CD8-positive, alpha-beta T cell (primary cell): ENCODE measurements at regions of chr2 and their contacts with region 1.

Region 1: DNA sequence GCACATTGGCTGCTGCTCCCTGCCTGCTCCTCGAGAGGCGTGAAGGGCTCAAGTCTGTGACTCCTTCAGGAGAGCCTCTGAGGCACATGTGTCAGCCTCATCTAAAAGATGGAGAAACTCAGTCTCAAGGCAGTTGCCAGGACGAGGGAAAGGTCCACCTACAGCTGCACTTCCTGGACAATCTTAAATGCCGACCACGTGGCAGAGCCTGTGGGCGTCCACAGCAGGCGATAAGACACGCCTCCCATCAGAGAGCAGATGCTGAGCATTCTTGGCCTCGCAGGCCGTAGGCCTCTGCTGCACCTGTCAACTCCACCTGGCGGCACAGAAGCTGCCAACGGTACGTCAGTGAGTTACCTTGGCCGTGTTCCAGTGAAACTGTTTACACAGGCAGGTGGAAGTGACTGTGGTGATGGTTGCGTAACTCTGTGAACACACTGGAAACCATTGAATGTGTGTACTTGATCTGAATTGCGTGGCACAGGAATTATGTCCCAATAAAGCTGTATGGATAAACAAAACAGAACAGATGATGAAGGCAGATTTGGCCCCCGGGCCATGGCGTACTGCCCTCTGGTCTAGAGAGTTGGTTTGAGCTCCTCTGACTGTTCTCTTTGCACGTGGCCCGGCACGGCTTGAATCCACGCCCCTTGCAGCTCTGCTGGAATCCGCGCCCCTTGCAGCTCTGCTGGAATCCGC is 114.5 kb downstream of the RNF144A start:
- DNase-seq: peak; percentile 13 to 77 (median 51)
- ATAC-seq: peak; percentile 91
- H3K4me3 ChIP-seq: no peak overlapping the region
- H3K4me3 Mint-ChIP-seq: no peak overlapping the region
- H3K27ac ChIP-seq: peak overlapping the region in 1 of 2 experiments; percentile 24
- H3K27ac Mint-ChIP-seq: peak overlapping the region; percentile 69
- H3K4me1 ChIP-seq: peaks cover 6% of the 10 kb centered on the region
- H3K4me1 Mint-ChIP-seq: peaks cover 11% of the 10 kb centered on the region
- H3K27me3 ChIP-seq: no peaks in the 10 kb centered on the region
- H3K27me3 Mint-ChIP-seq: no peaks in the 10 kb centered on the region
- CTCF ChIP-seq: no peak

Region 2: DNA sequence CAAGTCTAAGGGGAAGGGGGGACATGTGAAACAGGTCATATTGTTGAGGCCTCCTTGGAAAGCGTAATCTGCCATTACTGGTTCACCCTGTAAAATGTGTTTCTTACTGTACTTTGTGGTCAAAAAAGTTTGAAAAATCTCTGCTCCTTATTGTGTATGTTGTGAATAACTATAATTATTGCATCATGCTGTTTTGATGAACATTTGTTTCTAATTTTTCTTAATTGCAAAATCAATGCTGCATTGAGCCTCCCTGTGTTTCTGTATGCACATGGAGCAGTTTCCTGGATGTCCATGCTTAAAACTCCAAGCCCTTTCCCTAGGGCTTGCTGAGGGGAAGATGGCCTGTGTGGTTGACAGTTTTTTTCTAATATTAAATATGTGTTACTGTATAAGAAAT is 44.1 kb after region 1 on chr2:
- CTCF ChIA-PET with region 1: no interaction called
- POLR2A ChIA-PET with region 1: no interaction called
- intact Hi-C with region 1: loop called in 1 of 2 experiments (anchors 1 kb)
- DNase-seq: no peak
- ATAC-seq: no peak
- H3K4me3 ChIP-seq: no peak overlapping the region
- H3K4me3 Mint-ChIP-seq: no peak overlapping the region
- H3K27ac ChIP-seq: no peak overlapping the region
- H3K27ac Mint-ChIP-seq: no peak overlapping the region
- H3K4me1 ChIP-seq: no peaks in the 10 kb centered on the region
- H3K4me1 Mint-ChIP-seq: no peaks in the 10 kb centered on the region
- H3K27me3 ChIP-seq: no peaks in the 10 kb centered on the region
- H3K27me3 Mint-ChIP-seq: no peaks in the 10 kb centered on the region
- CTCF ChIP-seq: no peak